Pancreas (tissue), 10 donors: ENCODE measurements at regions of chr17 and their contacts with region 1.

Region 1: GRCh38 chr17:59440784-59441441 is 109.5 kb downstream of the YPEL2 start:
- DNase-seq: peak; percentile 79 to 89 (median 82)
- ATAC-seq: peak; percentile 97 to 99 (median 98)
- H3K4me3 ChIP-seq: no peak overlapping the region
- H3K27ac ChIP-seq: peak overlapping the region in 1 of 4 donors; percentile 53
- H3K4me1 ChIP-seq: no peaks in the 10 kb centered on the region
- H3K27me3 ChIP-seq: no peaks in the 10 kb centered on the region
- CTCF ChIP-seq: peak; percentile 66 to 83 (median 74)

Region 2: DNA sequence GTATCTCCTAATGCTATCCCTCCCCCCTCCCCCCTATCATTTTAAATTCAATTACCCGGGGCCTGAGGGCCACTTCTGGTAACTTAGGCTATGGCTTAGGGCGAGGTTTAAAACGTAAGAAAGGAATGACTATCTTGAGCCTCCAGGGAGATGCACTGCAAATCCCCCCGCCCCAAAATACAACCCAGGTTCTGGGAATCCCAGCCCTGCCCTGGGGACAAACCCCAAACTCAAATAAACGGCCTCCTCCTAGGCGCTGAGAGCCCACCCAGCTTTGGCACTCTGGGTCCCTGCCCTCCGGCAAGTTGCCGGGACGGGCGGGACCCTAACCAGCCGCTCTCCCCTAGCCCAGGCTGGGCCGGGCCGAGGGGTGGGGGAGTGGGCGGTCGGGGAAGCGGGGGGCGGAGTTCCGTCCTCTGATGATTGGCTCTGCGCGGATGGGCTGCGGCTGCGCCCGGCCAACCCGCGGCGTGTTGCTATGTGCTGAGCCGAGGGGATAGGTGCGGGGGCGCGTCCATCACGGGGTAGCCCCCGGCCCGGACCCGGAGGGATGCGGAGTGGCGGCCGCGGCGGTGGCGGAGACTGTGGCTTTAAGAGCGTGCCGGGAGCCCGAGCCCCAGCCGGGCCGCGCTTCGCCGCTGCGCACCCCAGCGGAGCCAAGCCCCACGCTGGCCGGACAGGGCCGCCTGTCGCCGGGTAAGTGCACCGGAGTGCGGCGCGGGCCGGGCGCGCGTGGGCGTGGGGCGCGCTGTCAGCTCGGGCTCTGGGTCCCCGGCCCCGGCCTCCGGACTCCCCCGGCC is 109.6 kb before region 1 on chr17 and contains the start of gene YPEL2:
- intact Hi-C with region 1: loop called in 2 of 3 experiments (anchors 5 to 10 kb)
- DNase-seq: peak; percentile 96 to 98 (median 97)
- ATAC-seq: peak; percentile 82 to 89 (median 88)
- H3K4me3 ChIP-seq: peak within 1 kb of the TSS; percentile 80 to 98 (median 96)
- H3K27ac ChIP-seq: peak within 1 kb of the TSS; percentile 79 to 96 (median 92)
- H3K4me1 ChIP-seq: peaks cover 22 to 45% (median 27%) of the 10 kb centered on the region in 3 donors
- H3K27me3 ChIP-seq: no peaks in the 10 kb centered on the region
- CTCF ChIP-seq: no peak
- total RNA-seq, gene YPEL2: 9.1 to 28.7 (median 13.6) TPM

Region 3: DNA sequence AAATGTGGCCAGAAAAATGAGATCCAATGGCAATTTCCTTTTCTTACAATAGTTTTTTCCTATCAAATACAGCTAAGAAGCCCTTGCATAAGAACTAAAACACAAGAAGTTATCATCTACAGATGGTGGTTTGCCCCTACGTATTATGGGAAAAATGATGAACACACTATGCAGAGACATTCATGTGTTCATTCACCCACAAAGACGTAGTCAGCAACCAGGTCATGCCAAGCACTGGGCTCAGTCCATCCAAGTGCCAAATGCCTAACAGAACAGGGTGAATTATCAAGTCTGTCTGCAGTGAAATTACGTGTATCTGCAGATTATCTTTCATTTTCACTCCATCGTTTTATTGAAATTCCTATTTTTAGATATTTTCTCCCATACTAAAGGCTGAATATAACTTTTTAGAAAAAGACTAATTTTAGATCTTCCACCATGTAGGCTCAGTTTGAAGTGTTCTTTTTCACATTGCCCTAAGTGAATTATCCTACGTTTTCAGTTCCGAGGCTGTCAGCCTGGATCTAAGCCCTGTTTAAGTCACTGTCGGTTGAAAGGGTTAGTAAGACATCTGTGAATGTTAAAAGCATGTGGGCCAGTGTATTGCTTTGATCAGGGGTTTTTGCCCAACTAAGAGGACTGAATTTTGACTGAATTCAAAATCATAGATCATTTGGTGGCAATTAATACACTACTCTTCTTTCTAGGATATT is 46.4 kb after region 1 on chr17:
- intact Hi-C with region 1: loop called in 1 of 3 experiments (anchors 5 kb)
- DNase-seq: no peak
- ATAC-seq: no peak
- H3K4me3 ChIP-seq: no peak overlapping the region
- H3K27ac ChIP-seq: no peak overlapping the region
- H3K4me1 ChIP-seq: no peaks in the 10 kb centered on the region
- H3K27me3 ChIP-seq: no peaks in the 10 kb centered on the region
- CTCF ChIP-seq: no peak